RWPE1 (cell line): ENCODE measurements at regions of chr13 and their contacts with region 1.

Region 1: DNA sequence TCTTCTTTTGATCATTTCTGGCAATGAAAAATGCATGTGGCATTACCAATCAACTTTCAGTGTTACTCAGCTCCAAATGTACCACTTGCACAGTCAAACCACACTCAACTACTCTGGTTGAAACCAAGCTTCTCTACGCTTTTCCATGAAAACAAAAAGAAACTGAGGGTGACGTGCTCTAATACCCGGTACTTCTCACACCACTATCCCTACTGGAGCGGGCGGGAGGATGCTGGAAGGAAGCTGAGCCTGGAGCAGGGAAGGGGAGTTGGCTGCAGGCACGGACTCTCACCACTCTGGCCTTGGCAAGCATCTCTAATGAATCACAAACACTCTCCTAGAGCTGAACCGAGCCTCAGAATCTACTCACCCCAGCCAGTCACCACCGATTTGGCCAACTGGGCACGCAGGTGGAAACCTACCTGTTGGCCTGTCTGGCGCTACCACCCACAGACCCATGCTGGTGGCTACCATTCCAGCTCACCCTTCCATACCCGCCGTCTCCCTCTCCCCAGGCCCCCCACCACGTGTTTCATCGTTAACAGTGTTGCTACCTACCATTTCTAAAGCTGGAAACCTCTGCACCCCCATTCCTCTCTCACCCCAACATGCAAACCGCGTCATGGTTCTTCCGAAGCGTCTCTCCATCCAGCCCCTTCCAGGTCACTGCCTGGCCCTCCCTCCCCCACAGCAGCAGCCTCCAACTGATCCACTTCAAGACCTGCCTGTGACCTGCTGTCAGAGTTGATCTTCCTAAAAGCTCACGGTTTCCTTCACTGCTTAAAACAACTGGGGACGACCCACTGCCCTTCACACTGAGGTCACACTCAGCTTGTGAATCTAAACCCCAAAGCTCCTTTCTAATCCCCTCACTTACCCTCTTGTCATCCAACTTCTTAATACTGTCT is 48.0 kb downstream of the STK24 start:
- DNase-seq: peak; percentile 6
- H3K27ac ChIP-seq: peak overlapping the region; percentile 14; the same call in 1 of the 2 replicates
- CTCF ChIP-seq: no peak

Region 2: DNA sequence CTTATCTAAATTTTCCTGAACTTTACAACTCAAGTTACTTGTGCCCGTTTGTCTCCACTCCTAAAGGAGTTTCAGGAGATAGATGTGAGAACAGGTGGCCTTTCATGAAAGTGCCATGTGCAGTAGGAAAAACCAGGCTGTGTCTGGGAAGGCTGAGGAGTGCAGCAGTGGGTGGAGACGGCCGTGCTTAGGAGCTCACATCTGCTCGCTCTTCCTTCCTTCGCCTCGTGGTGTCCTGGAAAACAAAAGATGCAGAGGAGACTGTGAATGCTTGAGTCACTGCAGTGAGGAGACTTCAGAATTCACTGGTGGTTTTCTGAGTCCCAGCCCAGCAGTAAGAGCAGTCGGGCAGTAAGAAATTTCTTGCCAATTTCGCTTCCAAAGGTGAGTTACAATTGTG is 213.5 kb before region 1 on chr13:
- CTCF ChIA-PET with region 1: no interaction called
- POLR2A ChIA-PET with region 1: no interaction called
- DNase-seq: no peak
- H3K27ac ChIP-seq: no peak overlapping the region
- CTCF ChIP-seq: no peak

Region 3: GRCh38 chr13:98541191-98541590 is 12.3 kb after region 1 on chr13:
- CTCF ChIA-PET with region 1: no interaction called
- POLR2A ChIA-PET with region 1: interaction called, 10 read pairs
- DNase-seq: no peak
- H3K27ac ChIP-seq: no peak overlapping the region
- CTCF ChIP-seq: no peak